PC-9 (cell line): ENCODE measurements at regions of chr16 and their contacts with region 1.

Region 1: GRCh38 chr16:47408491-47408890 is 52.4 kb downstream of the ITFG1 start:
- DNase-seq: no peak
- H3K4me3 ChIP-seq: no peak overlapping the region
- H3K27ac ChIP-seq: no peak overlapping the region
- H3K4me1 ChIP-seq: no peaks in the 10 kb centered on the region
- H3K27me3 ChIP-seq: no peaks in the 10 kb centered on the region
- CTCF ChIP-seq: no peak

Region 2: DNA sequence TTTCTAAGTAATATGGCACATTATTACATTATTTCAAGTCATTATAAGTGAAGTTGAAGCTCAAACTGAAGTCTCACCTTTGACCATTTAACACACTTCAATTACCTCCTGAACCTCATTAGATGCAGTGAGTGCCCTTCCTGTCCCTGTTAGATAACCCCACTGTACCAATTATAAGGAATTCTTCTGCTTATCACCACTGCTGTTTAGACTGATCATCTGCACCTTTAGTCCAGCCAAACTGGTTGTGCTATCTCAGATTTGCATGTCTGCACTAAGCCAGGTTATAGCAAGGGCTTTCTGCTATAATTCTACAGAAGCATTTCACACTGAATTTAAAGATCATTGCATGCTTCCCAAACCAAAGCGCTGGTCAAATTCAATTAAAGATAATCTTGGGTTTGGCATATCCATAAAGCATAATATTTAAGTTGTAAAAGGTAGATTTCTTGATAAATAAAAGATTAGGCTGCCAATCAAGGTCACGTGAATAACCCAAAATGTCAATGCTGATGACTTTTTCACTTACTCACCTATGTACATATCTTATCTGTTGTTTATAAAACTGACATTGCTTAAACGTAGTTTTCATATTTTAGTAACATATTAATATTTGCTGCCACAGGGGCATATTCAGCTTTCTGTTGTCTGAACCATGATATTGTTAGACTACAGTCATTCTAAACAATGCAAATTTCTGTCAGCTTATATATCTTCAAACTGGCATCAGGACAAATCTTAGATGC is 40.5 kb after region 1 on chr16:
- CTCF ChIA-PET with region 1: no interaction called
- POLR2A ChIA-PET with region 1: no interaction called
- intact Hi-C with region 1: loop called (anchors 1 kb)
- DNase-seq: no peak
- H3K4me3 ChIP-seq: no peak overlapping the region
- H3K27ac ChIP-seq: no peak overlapping the region
- H3K4me1 ChIP-seq: no peaks in the 10 kb centered on the region
- H3K27me3 ChIP-seq: no peaks in the 10 kb centered on the region
- CTCF ChIP-seq: no peak

Region 3: GRCh38 chr16:47475786-47476185 is 67.3 kb after region 1 on chr16:
- CTCF ChIA-PET with region 1: no interaction called
- POLR2A ChIA-PET with region 1: no interaction called
- intact Hi-C with region 1: no loop called
- DNase-seq: no peak
- H3K4me3 ChIP-seq: no peak overlapping the region
- H3K27ac ChIP-seq: no peak overlapping the region
- H3K4me1 ChIP-seq: no peaks in the 10 kb centered on the region
- H3K27me3 ChIP-seq: no peaks in the 10 kb centered on the region
- CTCF ChIP-seq: no peak